Vagina (tissue), 2 donors: ENCODE measurements at regions of chr14 and their contacts with region 1.

Region 1: DNA sequence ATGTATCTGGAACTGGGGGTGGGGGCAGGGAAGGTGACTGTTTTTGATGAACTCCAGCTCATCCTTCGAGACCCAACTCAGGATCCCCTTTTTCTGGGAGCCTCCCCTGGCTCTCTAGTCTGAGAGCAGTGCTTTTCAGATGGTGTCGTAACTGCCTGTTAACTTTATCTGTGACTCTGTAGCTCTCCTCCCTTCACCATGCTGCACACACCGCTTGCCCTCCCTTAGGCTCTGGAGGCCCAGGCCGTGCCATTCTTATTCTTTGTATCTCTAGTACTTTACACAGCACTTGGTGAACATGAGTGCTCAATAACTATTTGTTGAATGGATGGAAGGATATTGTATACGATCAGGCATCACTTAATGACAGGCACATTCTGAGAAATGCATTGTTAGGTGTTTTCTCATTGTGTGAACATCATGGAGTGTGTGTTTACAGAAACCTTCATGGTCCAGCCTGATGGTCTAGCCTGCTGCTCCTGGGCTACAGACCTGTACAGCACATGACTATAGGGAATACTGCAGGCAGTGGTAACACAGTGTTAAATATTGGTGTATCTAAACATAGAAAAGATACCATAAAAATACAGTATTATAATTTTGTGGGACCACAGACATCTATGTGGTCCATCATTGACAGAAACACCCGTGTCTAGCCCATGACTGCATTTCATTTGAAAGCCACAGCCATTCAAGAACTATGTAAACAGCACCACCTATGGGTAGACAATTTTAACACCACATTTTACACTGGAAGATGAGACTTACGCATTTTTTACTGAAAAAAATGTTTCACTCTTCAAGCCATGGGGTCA is 91.8 kb downstream of the EML1 start:
- DNase-seq: no peak
- H3K4me3 ChIP-seq: no peak overlapping the region
- H3K27ac ChIP-seq: no peak overlapping the region
- H3K4me1 ChIP-seq: peaks cover 13% of the 10 kb centered on the region
- H3K27me3 ChIP-seq: no peaks in the 10 kb centered on the region
- CTCF ChIP-seq: peak; percentile 38 to 76 (median 62)
- POLR2A ChIP-seq: no peak

Region 2: GRCh38 chr14:99683619-99684355 is 201.3 kb before region 1 on chr14 and contains the start of gene CYP46A1:
- intact Hi-C with region 1: loop called (anchors 5 kb)
- DNase-seq: peak in 1 of 2 donors; percentile 99
- H3K4me3 ChIP-seq: peak within 1 kb of the TSS; percentile 83 to 86
- H3K27ac ChIP-seq: peak within 1 kb of the TSS; percentile 82
- H3K4me1 ChIP-seq: peaks cover 18% of the 10 kb centered on the region
- H3K27me3 ChIP-seq: no peaks in the 10 kb centered on the region
- CTCF ChIP-seq: peak in 1 of 3 experiments; percentile 24
- POLR2A ChIP-seq: no peak
- total RNA-seq, gene CYP46A1: 1.2 TPM

Region 3: GRCh38 chr14:99862136-99862535 is 22.9 kb before region 1 on chr14:
- intact Hi-C with region 1: no loop called
- DNase-seq: no peak
- H3K4me3 ChIP-seq: no peak overlapping the region
- H3K27ac ChIP-seq: no peak overlapping the region
- H3K4me1 ChIP-seq: no peaks in the 10 kb centered on the region
- H3K27me3 ChIP-seq: no peaks in the 10 kb centered on the region
- CTCF ChIP-seq: no peak
- POLR2A ChIP-seq: no peak

Region 4: GRCh38 chr14:99872786-99873440 is 12.1 kb before region 1 on chr14:
- intact Hi-C with region 1: no loop called
- DNase-seq: no peak
- H3K4me3 ChIP-seq: no peak overlapping the region
- H3K27ac ChIP-seq: no peak overlapping the region
- H3K4me1 ChIP-seq: no peaks in the 10 kb centered on the region
- H3K27me3 ChIP-seq: no peaks in the 10 kb centered on the region
- CTCF ChIP-seq: no peak
- POLR2A ChIP-seq: no peak

Region 5: DNA sequence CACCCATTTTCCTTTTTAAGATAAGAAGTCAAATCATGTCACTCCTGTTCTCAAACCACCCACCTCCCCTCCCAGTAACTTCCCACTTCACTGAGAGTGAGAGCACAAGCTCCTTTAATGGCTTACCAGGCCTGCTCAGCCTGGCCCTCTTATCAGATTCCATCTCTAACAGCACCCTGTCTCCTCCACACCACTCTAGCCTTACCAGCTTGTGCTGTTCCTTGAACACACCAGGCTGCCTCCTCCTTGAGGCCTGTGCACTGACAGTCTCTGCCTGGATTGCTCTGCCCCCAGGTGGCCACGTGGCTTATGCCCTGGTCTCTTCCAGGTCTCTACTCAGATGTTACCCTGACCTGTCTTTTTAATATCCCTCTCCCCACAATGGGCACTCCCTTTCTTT is 140.1 kb after region 1 on chr14:
- intact Hi-C with region 1: no loop called
- DNase-seq: no peak
- H3K4me3 ChIP-seq: no peak overlapping the region
- H3K27ac ChIP-seq: no peak overlapping the region
- H3K4me1 ChIP-seq: peaks cover 20% of the 10 kb centered on the region
- H3K27me3 ChIP-seq: no peaks in the 10 kb centered on the region
- CTCF ChIP-seq: no peak
- POLR2A ChIP-seq: no peak